H1 (cell line): ENCODE measurements at regions of chr17 and their contacts with region 1.

Region 1: DNA sequence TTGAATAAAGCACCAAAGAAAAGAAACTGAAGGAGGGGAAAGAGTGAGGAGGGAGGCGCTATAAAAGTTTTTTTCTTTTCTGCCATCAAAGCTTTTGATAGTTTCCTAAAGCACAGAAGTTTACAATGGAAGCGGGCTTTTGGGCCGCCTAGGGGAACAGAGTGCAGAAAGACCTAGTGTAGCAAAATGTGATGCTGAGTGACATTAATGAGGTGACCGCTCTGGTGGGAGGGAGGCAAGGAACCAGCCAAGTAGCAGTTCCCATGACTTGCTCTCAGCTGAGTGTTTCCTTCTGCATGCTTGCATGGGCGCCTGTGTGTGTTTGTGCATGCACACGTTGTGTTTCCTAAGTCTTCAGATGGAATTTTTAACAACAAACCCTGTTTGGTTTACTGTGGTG is 15.5 kb downstream of the MSI2 start:
- DNase-seq: no peak
- H3K4me3 ChIP-seq: no peak overlapping the region
- H3K27ac ChIP-seq: no peak overlapping the region
- H3K4me1 ChIP-seq: peaks cover 4 to 10% (median 7%) of the 10 kb centered on the region in 4 experiments; a peak in 5 of 7 replicates
- H3K27me3 ChIP-seq: no peaks in the 10 kb centered on the region; a peak in 1 of 7 replicates
- CTCF ChIP-seq: no peak
- EP300 ChIP-seq: no peak
- POLR2A ChIP-seq: no peak
- RAD21 ChIP-seq: no peak

Region 2: DNA sequence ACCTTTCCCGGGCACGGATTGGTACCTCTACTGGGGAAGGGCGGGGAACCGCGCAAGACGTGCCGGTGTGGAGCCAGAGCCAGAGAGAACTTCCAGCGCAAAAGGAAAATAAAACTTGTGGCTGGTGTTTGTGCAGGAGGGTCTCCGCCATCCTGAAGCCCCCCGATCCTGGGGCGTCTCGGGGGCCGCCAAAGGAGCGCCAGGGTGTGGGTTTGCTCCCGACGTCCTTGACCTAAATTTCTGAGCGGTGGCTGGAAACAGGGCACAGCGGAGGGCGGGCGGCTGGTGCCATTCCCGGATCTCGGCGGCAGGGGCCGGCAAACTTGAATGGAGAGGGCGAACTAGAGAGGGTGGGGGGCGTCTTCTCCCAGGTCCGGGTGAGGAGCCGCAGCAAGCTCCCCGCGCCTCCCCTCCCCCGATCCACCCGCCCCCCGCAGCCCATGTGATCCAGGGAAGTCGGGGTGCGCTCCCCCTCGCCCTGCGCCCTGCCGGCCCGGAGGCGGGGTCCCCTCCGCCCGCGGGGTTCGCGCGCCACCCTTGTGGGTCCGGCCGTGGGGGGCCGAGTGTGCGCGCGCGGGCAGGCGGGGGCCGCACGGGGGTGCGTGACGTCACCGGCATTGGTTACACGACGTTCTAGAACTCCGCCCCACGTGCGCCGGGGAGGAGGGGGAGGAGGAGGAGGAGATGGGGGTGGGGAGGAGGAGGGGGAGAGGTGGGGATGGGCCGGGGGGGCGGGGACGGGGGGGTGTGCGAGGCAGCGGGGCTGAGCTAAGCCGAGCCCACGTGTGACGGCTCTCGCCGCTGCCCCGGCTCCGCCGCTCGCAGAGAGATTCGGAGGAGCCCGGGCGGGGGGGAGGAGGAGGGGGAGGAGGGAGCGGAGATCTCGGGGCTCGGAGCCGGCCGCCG is 15.8 kb before region 1 on chr17 and contains the start of gene MSI2:
- CTCF ChIA-PET with region 1: interaction called, 15 read pairs
- POLR2A ChIA-PET with region 1: interaction called, 22 read pairs
- DNase-seq: peak in 1 of 2 experiments; percentile 87
- H3K4me3 ChIP-seq: peak within 1 kb of the TSS; percentile 72 to 94 (median 74)
- H3K27ac ChIP-seq: peak within 1 kb of the TSS; percentile 70; the same call in 1 of the 2 replicates
- H3K4me1 ChIP-seq: peaks cover 4 to 30% (median 6%) of the 10 kb centered on the region in 4 experiments; a peak in 6 of 7 replicates
- H3K27me3 ChIP-seq: peaks cover 2 to 10% (median 8%) of the 10 kb centered on the region in 4 experiments; a peak in 6 of 7 replicates
- CTCF ChIP-seq: peak in 1 of 3 experiments; percentile 10; a peak in 1 of 4 replicates
- EP300 ChIP-seq: no peak
- POLR2A ChIP-seq: no peak
- RAD21 ChIP-seq: peak in 1 of 2 experiments; percentile 8; a peak in 1 of 4 replicates
- total RNA-seq, gene MSI2: 73.1 and 80.6 TPM in 2 replicates

Region 3: DNA sequence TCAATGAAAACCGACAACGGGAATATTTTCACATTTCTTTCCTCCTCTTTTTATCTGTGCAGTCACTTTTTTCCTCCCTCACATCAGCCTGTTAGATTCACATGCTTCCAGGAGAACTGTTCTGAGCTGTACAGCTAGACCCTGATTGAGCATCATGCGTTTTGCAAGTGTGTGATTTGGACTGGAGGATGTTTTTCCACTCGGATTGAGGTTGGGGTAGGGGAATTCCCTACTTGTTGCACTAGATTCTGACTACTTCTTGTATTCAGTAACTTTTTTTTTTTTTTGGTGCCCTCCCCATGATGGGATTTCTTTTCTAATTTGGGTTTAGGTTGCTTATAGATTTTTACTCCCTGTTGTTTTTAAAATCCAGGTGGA is 10.7 kb before region 1 on chr17:
- CTCF ChIA-PET with region 1: interaction called, 15 read pairs
- POLR2A ChIA-PET with region 1: interaction called, 22 read pairs
- DNase-seq: no peak
- H3K4me3 ChIP-seq: peak overlapping the region in 1 of 4 experiments; percentile 94; a peak in 2 of 8 replicates
- H3K27ac ChIP-seq: no peak overlapping the region
- H3K4me1 ChIP-seq: peaks cover 2 to 31% (median 6%) of the 10 kb centered on the region in 4 experiments; a peak in 6 of 7 replicates
- H3K27me3 ChIP-seq: peaks cover 0 to 2% (median 0%) of the 10 kb centered on the region in 4 experiments; a peak in 1 of 7 replicates
- CTCF ChIP-seq: no peak
- EP300 ChIP-seq: no peak
- POLR2A ChIP-seq: no peak
- RAD21 ChIP-seq: no peak

Region 4: GRCh38 chr17:57288040-57288772 is 16.4 kb after region 1 on chr17:
- CTCF ChIA-PET with region 1: interaction called, 5 read pairs
- POLR2A ChIA-PET with region 1: interaction called, 10 read pairs
- DNase-seq: no peak
- H3K4me3 ChIP-seq: no peak overlapping the region
- H3K27ac ChIP-seq: no peak overlapping the region
- H3K4me1 ChIP-seq: peaks cover 8 to 39% (median 18%) of the 10 kb centered on the region in 4 experiments
- H3K27me3 ChIP-seq: no peaks in the 10 kb centered on the region
- CTCF ChIP-seq: no peak
- EP300 ChIP-seq: no peak
- POLR2A ChIP-seq: no peak
- RAD21 ChIP-seq: no peak